KBM-7 (cell line): ENCODE measurements at regions of chr10 and their contacts with region 1.

Region 1: GRCh38 chr10:103069453-103070331 is 123.4 kb downstream of the NT5C2 start:
- DNase-seq: peak; percentile 72

Region 2: GRCh38 chr10:102743588-102744373 is 325.9 kb before region 1 on chr10 and contains the start of gene WBP1L:
- in situ Hi-C with region 1: loop called (anchors 25 kb)
- DNase-seq: peak; percentile 99